ENCODE measurements at regions of chr10 and their contacts with region 1.

Region 1: DNA sequence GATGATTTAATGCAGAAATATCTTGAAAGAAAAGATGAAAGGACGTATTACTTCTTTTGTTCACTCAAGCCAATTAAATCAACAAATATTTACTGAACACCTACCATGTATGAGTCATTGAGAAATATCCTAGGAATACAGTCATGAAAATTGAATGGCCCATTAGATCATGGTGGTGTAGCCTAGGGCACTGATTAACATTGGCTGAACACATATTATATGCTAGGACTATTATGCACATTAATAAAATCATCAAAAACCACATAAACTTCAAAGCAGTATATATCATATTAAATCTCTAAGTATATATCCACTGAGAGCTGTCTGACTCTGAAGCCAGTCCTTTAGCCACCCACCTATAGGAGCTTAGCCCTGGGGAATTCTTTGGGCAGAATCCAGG is 41.8 kb downstream of the FAM204A start:
- DNase-seq: no peak
- ATAC-seq: no peak
- H3K4me3 ChIP-seq: no peak overlapping the region
- H3K27ac ChIP-seq: no peak overlapping the region
- H3K4me1 ChIP-seq: no peaks in the 10 kb centered on the region
- H3K27me3 ChIP-seq: no peaks in the 10 kb centered on the region
- CTCF ChIP-seq: no peak

Region 2: GRCh38 chr10:118183180-118183579 is 117.1 kb before region 1 on chr10:
- intact Hi-C with region 1: no loop called
- DNase-seq: no peak
- ATAC-seq: no peak
- H3K4me3 ChIP-seq: no peak overlapping the region
- H3K27ac ChIP-seq: no peak overlapping the region
- H3K4me1 ChIP-seq: no peaks in the 10 kb centered on the region
- H3K27me3 ChIP-seq: no peaks in the 10 kb centered on the region
- CTCF ChIP-seq: no peak

Region 3: DNA sequence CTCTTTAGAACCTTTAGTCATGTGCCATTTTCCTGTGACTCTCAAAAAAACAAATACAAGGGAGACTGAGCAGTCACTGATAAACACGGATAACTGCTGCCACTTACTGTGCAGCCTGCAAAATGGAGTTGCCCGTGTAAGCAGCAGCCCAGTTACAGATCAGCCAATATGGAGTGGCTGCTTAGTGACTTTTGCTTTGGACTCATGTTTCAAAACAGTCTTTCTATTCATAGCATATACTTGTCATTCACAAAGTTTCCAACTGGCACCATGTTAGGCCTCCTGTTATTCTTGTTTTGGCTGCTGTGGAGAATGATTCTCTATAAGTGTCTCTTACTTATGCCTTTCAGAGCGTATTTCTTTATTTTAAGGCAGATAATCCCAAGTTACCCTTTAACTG is 38.8 kb after region 1 on chr10:
- intact Hi-C with region 1: loop called in 1 of 10 experiments (anchors 5 kb)
- DNase-seq: peak in 1 of 2 donors; percentile 38
- ATAC-seq: peak; percentile 30 to 88 (median 78)
- H3K4me3 ChIP-seq: peak overlapping the region in 1 of 10 donors; percentile 18
- H3K27ac ChIP-seq: peak overlapping the region in 7 of 10 donors; percentile 20 to 79 (median 72)
- H3K4me1 ChIP-seq: peaks cover 0 to 55% (median 47%) of the 10 kb centered on the region in 9 donors
- H3K27me3 ChIP-seq: no peaks in the 10 kb centered on the region
- CTCF ChIP-seq: peak in 2 of 9 donors; percentile 6 to 11

Measured in heart right ventricle (tissue), 16 donors.